ENCODE measurements at regions of chr4 and their contacts with region 1.

Region 1: DNA sequence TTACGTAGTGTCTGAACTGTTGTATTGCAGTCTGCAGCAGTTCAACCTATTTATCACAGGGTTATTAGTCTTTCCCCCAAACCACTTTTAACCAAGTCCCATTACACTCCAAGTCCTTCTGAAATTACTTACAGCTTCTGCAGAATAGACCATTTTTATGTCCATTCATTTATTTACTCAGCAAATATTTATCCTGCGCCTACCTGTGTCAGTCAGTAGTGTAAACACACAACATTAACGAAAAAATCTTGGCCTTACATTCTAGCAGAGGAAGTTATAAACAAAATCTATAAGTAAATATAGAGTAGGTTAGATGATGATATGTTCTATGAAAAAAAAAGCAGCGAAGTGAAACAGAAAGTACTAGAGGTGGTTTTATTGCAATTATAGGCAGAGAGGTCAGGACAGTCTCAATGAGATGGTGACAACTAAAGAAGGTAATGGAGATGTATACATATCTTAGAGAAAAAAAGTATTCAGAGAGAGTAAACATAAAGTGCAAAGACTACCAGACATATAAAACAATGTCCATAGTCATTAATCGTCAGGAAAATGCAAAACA is 534.7 kb downstream of the KCNIP4 start:
- DNase-seq: no peak
- H3K4me3 ChIP-seq: peak overlapping the region in 1 of 4 donors; percentile 17
- H3K27ac ChIP-seq: no peak overlapping the region
- H3K4me1 ChIP-seq: peaks cover 0 to 3% (median 1%) of the 10 kb centered on the region in 4 donors
- H3K27me3 ChIP-seq: no peaks in the 10 kb centered on the region
- CTCF ChIP-seq: no peak
- EP300 ChIP-seq: no peak
- POLR2A ChIP-seq: no peak

Region 2: DNA sequence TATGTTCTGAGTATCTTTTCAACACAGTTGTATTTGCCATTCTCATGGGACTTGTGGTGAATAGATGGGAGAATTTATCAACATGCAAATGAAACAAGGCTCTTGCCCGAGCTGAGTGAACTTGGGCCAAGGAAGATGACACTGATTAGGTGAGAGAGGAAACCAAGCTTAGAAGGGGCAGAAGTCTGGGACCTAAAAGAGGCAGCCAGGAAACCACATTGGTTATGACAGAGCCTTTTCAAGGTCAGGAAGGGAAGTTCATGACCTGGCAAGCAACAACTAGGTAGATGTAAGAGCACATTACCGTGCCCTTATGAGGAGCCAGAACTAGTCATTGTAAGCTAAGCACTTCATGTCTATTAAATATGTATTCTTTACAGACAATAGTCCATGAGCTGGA is 123.3 kb before region 1 on chr4:
- in situ Hi-C with region 1: no loop called
- intact Hi-C with region 1: loop called (anchors 10 kb)
- DNase-seq: no peak
- H3K4me3 ChIP-seq: no peak overlapping the region
- H3K27ac ChIP-seq: no peak overlapping the region
- H3K4me1 ChIP-seq: no peaks in the 10 kb centered on the region
- H3K27me3 ChIP-seq: no peaks in the 10 kb centered on the region
- CTCF ChIP-seq: no peak
- EP300 ChIP-seq: no peak
- POLR2A ChIP-seq: no peak

Region 3: DNA sequence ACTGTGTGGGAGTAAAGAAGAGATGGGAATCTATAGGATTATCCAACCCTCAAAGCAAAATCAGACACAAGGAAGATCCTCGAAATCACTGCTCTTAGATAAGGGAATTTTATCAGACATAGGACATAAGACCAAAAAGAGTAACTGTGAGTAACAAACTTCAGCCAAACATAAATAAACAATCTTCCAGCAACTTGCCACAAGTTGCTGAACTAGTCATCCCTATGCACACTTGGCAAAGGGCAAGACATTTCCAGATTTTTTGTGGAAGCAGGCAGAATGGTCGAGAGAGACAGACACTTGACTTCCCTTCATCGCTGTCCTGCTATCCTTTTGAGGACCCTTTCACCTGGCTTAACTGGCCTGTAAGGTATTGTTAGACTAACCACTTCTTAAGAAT is 445.1 kb after region 1 on chr4:
- in situ Hi-C with region 1: no loop called
- intact Hi-C with region 1: no loop called
- DNase-seq: no peak
- H3K4me3 ChIP-seq: no peak overlapping the region
- H3K27ac ChIP-seq: no peak overlapping the region
- H3K4me1 ChIP-seq: no peaks in the 10 kb centered on the region
- H3K27me3 ChIP-seq: no peaks in the 10 kb centered on the region
- CTCF ChIP-seq: no peak
- EP300 ChIP-seq: no peak
- POLR2A ChIP-seq: no peak

Measured in transverse colon (tissue), 4 donors.